Activated CD4-positive, alpha-beta T cell treated with anti-CD3 and anti-CD28 coated beads, Interleukin-2, amount 10 ng/mL, durations not matched to agents 24 days and 14 days (primary cell): ENCODE measurements at regions of chr18 and their contacts with region 1.

Region 1: DNA sequence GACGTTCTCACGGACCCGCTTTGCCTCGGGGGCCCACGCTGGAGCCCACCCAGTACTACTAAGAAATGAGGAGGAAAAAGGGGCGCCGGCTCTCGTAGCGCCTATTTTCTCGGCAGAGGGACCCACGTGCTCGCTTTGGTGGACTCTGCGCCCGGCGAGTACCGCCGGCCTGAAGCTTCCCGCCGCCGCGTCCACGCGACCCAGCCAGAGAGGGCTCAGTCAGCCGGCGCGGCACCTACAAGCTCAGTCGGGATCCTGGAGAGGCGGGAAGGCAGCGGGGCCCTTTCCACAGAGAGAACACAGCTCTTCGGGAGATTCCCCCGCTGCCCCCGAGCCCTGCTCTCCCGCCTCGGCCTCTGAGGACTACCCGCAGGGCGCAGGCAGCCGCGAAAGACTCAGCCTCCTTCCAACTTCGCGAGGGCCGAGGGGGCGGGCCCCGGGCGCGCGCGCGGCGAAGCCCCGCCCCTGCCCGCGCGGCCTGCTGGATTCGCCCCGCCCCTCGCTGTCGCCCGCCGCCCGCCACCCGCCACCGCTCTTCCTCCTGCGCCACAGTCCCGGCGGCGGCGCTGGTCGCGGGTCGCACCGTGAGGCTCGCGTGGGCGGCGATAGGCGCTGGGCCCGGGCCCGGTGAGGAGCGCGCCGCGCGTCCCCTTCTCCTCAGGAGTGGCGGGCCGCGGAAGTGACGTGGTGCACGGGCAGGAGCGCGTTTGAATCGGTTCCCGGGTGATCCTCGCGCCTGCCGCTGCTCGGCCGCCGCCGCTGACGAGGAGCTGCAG is at the start of gene SMCHD1:
- DNase-seq: peak; percentile 96
- H3K4me3 Mint-ChIP-seq: peak within 1 kb of the TSS; percentile 94
- H3K27ac Mint-ChIP-seq: peak within 1 kb of the TSS; percentile 100
- H3K4me1 Mint-ChIP-seq: peaks cover 30% of the 10 kb centered on the region
- H3K27me3 Mint-ChIP-seq: no peaks in the 10 kb centered on the region
- total RNA-seq, gene SMCHD1: 98.4 and 109 TPM in 2 replicates

Region 2: DNA sequence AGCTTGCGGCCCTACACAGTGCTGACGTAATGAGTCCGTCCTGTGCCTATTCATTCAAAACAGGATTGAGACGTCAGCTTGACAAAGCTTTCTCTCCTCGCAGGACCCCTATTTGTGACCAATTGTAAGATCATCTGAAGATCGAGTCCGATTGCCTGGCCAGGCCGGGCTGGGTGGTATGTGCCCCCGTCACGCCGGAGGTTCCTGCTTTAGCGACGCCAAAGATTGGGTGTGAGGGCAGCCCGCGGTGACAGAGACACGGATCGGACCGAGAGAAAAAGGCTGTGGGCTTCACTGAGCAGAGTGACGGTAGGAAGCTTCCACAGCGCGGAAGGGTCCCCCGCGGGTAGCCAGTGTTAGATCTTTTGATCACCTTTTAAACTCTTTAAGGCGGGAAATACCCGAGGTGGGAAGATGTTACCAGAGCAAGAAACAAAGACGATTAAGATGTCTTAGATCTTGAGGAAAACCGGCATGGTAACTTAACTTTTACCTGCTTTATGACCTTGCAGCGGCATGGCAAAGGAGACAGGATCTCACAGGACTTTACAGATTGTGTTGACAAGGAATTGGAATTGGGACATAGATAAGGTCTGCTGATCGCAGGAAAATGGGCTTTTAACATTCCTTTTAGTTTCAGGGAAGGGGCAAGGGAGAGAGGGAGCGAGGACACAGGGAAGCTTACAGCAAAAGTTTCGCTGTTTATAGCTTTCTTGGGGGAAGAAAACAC is 304.1 kb before region 1 on chr18:
- intact Hi-C with region 1: no loop called
- DNase-seq: no peak
- H3K4me3 Mint-ChIP-seq: no peak overlapping the region
- H3K27ac Mint-ChIP-seq: no peak overlapping the region
- H3K4me1 Mint-ChIP-seq: no peaks in the 10 kb centered on the region
- H3K27me3 Mint-ChIP-seq: peaks cover 2% of the 10 kb centered on the region

Region 3: GRCh38 chr18:2589345-2590068 is 65.9 kb before region 1 on chr18:
- intact Hi-C with region 1: loop called (anchors 5 kb)
- DNase-seq: no peak
- H3K4me3 Mint-ChIP-seq: peak overlapping the region; percentile 65
- H3K27ac Mint-ChIP-seq: peak overlapping the region; percentile 94
- H3K4me1 Mint-ChIP-seq: peaks cover 42% of the 10 kb centered on the region
- H3K27me3 Mint-ChIP-seq: no peaks in the 10 kb centered on the region

Region 4: DNA sequence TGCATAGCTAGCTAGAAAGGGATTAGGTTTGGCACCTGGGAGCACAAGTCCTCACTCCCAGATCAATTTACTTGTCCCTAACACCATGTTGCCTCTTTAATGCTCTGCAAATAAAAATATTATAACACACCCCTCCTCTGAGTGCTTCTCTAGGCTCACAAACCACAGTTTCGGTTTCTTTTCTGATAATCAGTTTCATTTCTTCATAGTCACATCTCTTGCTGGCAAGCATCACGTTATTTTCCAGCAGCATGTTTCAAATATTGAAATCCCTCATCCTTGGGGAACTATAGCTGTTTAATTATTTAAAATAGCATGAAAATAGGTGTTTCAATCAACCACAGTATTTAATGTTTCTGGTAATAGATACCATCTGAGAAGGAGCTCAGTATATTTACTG is 13.7 kb before region 1 on chr18:
- intact Hi-C with region 1: loop called (anchors 1 kb)
- DNase-seq: peak; percentile 75
- H3K4me3 Mint-ChIP-seq: peak overlapping the region; percentile 70
- H3K27ac Mint-ChIP-seq: peak overlapping the region; percentile 87
- H3K4me1 Mint-ChIP-seq: peaks cover 43% of the 10 kb centered on the region
- H3K27me3 Mint-ChIP-seq: no peaks in the 10 kb centered on the region

Region 5: GRCh38 chr18:2672410-2672809 is 17.0 kb after region 1 on chr18:
- intact Hi-C with region 1: no loop called
- DNase-seq: no peak
- H3K4me3 Mint-ChIP-seq: no peak overlapping the region
- H3K27ac Mint-ChIP-seq: no peak overlapping the region
- H3K4me1 Mint-ChIP-seq: peaks cover 43% of the 10 kb centered on the region
- H3K27me3 Mint-ChIP-seq: no peaks in the 10 kb centered on the region

Region 6: GRCh38 chr18:2805970-2806943 is 150.9 kb after region 1 on chr18:
- intact Hi-C with region 1: no loop called
- DNase-seq: peak; percentile 44
- H3K4me3 Mint-ChIP-seq: no peak overlapping the region
- H3K27ac Mint-ChIP-seq: no peak overlapping the region
- H3K4me1 Mint-ChIP-seq: peaks cover 3% of the 10 kb centered on the region
- H3K27me3 Mint-ChIP-seq: peaks cover under 1% of the 10 kb centered on the region

Region 7: GRCh38 chr18:3012964-3013804 is 357.8 kb after region 1 on chr18 and contains the start of gene LPIN2:
- intact Hi-C with region 1: loop called (anchors 5 kb)
- DNase-seq: peak; percentile 99
- H3K4me3 Mint-ChIP-seq: peak within 1 kb of the TSS; percentile 93
- H3K27ac Mint-ChIP-seq: peak within 1 kb of the TSS; percentile 96
- H3K4me1 Mint-ChIP-seq: peaks cover 56% of the 10 kb centered on the region
- H3K27me3 Mint-ChIP-seq: no peaks in the 10 kb centered on the region
- total RNA-seq, gene LPIN2: 111 and 118 TPM in 2 replicates

Region 8: DNA sequence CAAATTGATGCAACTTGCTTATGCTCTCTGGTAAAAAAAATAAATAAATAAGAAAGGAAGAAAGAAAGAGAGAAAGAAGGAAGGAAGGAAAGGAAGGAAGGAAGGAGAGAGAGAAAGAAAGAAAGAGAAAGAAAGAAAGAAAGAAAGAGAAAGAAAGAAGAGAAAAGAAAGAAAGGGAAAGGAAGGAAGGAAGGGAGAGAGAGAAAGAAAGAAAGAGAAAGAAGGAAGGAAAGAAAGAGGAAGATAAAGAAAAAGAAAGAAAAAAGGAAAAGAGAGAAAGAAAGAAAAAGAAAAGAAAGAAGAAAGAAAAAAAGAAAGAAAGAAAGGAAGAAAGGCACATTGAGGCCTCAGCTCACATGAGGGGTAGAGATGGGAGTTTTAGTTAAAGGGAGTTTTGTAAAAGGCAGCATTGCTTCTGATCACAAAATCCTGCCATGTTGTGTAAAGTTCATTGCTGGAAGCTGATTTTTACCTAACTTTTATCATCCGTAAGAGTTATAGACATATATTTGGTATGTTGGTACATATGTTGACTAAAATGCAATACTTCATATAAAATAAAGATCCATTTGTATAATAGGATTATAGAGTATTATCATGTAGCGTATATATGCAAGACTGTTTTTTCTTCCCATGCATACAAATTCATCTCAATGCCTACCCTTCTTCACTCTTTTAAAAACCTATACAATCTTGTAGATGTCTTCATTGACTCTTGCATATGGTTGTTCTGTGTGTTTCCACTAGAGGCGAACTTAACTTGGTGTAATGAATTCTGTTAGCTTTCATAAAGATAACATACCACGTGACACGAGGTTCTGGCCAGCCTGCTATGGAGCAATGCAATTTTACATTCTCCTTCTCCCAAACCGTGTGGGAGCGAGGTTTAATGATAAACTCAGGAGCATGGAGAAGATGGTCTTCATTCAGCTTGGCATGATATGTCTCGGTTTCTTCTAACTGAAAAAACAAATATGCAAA is 531.6 kb after region 1 on chr18:
- intact Hi-C with region 1: no loop called
- DNase-seq: peak; percentile 49
- H3K4me3 Mint-ChIP-seq: no peak overlapping the region
- H3K27ac Mint-ChIP-seq: no peak overlapping the region
- H3K4me1 Mint-ChIP-seq: no peaks in the 10 kb centered on the region
- H3K27me3 Mint-ChIP-seq: no peaks in the 10 kb centered on the region